ENCODE measurements at regions of chr12 and their contacts with region 1.

Region 1: GRCh38 chr12:80763874-80764273 is 47.2 kb downstream of the MYF5 start:
- DNase-seq: no peak
- CTCF ChIP-seq: peak; percentile 41

Region 2: GRCh38 chr12:80485222-80485987 is 278.5 kb before region 1 on chr12:
- in situ Hi-C with region 1: loop called (anchors 25 kb)
- DNase-seq: no peak
- CTCF ChIP-seq: no peak

Region 3: GRCh38 chr12:81187686-81188085 is 423.8 kb after region 1 on chr12:
- in situ Hi-C with region 1: no loop called
- DNase-seq: no peak
- CTCF ChIP-seq: no peak